ENCODE measurements at regions of chr2 and their contacts with region 1.

Region 1: DNA sequence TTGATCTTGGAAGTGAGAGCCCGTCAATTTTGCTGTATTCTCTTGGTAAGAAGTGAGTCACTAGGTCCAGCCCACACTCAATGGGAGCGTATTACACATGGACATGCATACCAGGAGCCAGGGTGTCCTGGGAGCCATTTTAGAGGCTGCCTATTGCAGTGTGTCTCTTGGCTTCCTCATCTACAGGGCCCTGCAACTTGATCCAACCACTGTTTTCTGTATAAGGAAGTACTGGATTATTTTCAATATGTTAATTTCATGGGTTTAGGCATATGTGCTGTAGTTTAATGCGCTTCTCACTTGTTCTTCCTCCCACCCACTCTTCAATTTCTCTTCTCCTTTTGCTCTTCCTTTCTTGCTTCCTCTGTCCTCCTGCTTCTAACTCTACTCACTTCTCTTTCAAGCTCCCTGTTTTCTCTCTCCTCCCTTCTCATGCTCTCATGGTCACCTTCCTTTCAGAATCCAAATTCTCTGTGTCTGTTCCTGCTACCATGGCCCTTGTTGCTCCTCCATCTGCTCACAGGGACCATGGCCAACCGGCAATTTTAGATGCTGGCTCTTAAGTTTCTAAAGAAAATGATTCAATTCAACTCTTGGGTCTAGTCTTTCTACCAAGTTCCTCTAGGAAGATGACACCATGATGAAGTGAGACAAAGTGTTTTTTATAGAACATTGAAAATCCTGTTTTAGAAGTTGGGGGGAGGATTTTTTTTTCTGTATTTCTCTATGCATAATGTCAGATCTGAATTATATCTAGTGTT is 152.0 kb upstream of the ZEB2 start:
- DNase-seq: no peak
- H3K4me3 ChIP-seq: no peak overlapping the region
- H3K27ac ChIP-seq: peak overlapping the region; percentile 7
- H3K4me1 ChIP-seq: peaks cover 50% of the 10 kb centered on the region
- CTCF ChIP-seq: no peak

Region 2: DNA sequence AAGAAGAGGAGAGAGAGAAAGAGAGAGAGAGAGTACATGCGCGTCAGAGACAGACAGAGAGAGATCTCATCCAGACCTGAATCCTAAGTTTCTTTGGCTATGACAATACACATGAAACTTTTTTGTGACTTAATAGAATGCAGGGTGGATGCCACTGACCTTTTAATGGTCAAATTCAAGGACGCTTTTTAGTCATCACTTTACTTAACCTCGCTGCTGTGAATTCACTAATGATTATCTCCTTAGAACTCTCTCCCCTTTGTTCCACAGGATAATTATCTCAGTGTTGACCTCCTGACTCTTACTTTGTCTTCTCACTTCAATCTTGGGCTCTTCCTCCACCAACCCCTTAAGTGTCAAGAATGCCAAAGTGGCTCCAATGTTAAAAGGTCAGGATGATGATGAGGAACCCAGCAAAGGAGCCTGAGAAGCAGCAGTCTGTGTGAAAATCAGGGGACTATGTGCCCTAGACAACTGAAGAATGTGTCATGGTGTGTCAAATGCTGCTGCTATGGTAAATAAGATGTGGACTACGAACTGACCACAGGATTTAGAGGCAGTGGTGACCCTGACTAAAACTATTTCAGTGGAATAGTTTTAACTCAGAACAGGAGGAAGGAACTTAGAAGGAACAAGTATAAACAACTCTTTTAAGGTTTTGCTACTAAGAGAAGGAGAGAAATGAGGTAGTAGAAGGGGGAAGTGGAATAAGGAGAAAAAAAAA is 534.0 kb before region 1 on chr2:
- CTCF ChIA-PET with region 1: no interaction called
- POLR2A ChIA-PET with region 1: no interaction called
- intact Hi-C with region 1: no loop called
- DNase-seq: no peak
- H3K4me3 ChIP-seq: no peak overlapping the region
- H3K27ac ChIP-seq: no peak overlapping the region
- H3K4me1 ChIP-seq: no peaks in the 10 kb centered on the region
- CTCF ChIP-seq: no peak

Region 3: GRCh38 chr2:144659731-144660275 is 12.1 kb before region 1 on chr2:
- CTCF ChIA-PET with region 1: no interaction called
- POLR2A ChIA-PET with region 1: interaction called, 43 read pairs
- intact Hi-C with region 1: no loop called
- DNase-seq: no peak
- H3K4me3 ChIP-seq: no peak overlapping the region
- H3K27ac ChIP-seq: no peak overlapping the region
- H3K4me1 ChIP-seq: peaks cover 12% of the 10 kb centered on the region
- CTCF ChIP-seq: no peak

Region 4: GRCh38 chr2:144682248-144682647 is 10.4 kb after region 1 on chr2:
- CTCF ChIA-PET with region 1: interaction called, 3 read pairs
- POLR2A ChIA-PET with region 1: interaction called, 80 read pairs
- intact Hi-C with region 1: no loop called
- DNase-seq: no peak
- H3K4me3 ChIP-seq: no peak overlapping the region
- H3K27ac ChIP-seq: no peak overlapping the region
- H3K4me1 ChIP-seq: peaks cover 86% of the 10 kb centered on the region
- CTCF ChIP-seq: no peak